ENCODE measurements at regions of chr15 and their contacts with region 1.

Region 1: DNA sequence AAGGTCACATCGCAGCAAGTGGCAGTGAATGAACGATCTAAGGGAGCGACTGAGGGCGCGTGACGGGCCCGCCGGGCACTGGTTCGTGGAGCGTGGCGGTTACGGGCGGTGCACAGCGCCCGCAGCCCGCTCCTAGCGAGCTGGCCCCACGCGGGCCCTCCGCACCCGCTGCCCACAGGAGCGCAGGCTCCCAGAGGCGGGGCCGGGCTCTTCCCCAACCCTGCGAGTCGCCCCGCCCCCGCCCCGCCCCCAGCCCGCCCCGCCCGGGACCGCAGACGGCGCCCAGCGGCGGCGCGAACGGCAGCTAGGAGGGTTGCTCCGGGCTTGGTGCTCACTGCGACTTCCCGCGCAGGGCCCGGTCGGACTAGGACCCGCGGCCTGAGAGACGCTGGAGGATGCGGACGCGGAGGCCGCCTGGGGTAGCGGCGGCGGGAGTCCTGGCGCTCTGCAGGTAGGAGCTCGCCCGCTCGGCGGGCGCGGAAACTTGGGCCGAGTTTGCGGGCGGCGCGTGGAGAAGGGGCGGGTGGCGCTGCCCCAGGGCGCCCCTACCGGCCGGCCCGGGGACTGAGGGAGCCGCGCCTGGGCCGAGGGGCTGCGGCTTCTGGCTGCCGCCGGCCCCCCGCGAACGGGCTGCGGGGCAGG is at the start of gene C15orf39:
- DNase-seq: peak; percentile 67
- H3K4me3 ChIP-seq: peak within 1 kb of the TSS; percentile 78 to 95 (median 87)
- H3K27ac ChIP-seq: peak within 1 kb of the TSS; percentile 89
- H3K4me1 ChIP-seq: peaks cover 33% of the 10 kb centered on the region
- H3K27me3 ChIP-seq: no peaks in the 10 kb centered on the region
- CTCF ChIP-seq: peak; percentile 40 to 62
- total RNA-seq, gene C15orf39: 3.8 to 22.8 TPM

Region 2: GRCh38 chr15:74937596-74938296 is 264.0 kb before region 1 on chr15 and contains the start of gene COX5A:
- CTCF ChIA-PET with region 1: no interaction called
- dilution Hi-C with region 1: no loop called
- in situ Hi-C with region 1: no loop called
- intact Hi-C with region 1: no loop called
- DNase-seq: peak; percentile 97
- H3K4me3 ChIP-seq: peak within 1 kb of the TSS; percentile 75 to 83 (median 81)
- H3K27ac ChIP-seq: peak within 1 kb of the TSS; percentile 66
- H3K4me1 ChIP-seq: peaks cover 2% of the 10 kb centered on the region
- H3K27me3 ChIP-seq: no peaks in the 10 kb centered on the region
- CTCF ChIP-seq: no peak
- total RNA-seq, gene COX5A: 40.2 to 209 TPM

Region 3: DNA sequence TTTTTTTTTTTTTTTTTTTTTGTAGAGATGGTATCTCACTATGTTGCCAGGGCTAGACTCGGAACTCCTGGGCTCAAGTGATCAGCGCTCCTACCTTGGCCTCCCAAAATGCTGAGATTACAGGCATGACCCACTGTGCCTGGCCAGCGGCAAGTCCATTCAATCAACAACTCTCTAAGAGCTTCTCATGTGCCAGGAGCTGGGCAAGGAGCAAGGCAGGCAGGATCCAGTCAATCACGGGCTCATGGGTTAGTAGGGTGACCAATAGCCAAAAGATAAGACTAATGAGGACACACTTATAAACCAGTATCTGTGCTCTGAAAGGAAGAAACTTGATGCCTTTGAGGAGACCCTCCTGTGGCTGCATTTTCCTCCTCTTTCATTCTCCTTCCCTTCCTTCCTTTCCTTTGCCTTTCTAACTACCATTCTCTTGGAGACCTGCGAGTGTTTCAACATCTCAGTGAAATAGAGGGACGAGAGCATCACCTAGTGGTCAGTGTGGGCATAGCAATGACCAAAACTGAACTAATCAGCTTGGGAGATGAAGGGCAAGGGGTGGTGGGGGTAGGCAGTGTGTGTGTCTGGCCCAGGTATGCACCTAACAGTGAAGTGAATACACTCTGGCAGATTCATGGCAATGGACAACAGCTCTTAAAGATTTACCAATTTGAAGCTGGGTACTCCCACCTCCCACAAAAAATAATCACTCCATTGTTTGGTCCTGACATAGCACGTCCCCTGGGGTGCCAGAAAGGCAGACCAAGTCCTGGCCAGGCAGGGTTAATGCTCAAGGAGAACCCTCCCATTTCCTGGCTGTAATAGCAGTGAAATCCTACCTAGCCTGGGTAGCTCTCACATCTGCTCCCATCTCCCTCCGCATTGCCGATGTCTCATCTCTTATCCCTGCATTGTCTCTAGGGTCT is 251.4 kb before region 1 on chr15:
- CTCF ChIA-PET with region 1: interaction called, 4 read pairs
- dilution Hi-C with region 1: no loop called
- in situ Hi-C with region 1: no loop called
- intact Hi-C with region 1: loop called (anchors 1 kb)
- DNase-seq: peak; percentile 59
- H3K4me3 ChIP-seq: no peak overlapping the region
- H3K27ac ChIP-seq: no peak overlapping the region
- H3K4me1 ChIP-seq: no peaks in the 10 kb centered on the region
- H3K27me3 ChIP-seq: no peaks in the 10 kb centered on the region
- CTCF ChIP-seq: peak; percentile 99 to 100

Region 4: DNA sequence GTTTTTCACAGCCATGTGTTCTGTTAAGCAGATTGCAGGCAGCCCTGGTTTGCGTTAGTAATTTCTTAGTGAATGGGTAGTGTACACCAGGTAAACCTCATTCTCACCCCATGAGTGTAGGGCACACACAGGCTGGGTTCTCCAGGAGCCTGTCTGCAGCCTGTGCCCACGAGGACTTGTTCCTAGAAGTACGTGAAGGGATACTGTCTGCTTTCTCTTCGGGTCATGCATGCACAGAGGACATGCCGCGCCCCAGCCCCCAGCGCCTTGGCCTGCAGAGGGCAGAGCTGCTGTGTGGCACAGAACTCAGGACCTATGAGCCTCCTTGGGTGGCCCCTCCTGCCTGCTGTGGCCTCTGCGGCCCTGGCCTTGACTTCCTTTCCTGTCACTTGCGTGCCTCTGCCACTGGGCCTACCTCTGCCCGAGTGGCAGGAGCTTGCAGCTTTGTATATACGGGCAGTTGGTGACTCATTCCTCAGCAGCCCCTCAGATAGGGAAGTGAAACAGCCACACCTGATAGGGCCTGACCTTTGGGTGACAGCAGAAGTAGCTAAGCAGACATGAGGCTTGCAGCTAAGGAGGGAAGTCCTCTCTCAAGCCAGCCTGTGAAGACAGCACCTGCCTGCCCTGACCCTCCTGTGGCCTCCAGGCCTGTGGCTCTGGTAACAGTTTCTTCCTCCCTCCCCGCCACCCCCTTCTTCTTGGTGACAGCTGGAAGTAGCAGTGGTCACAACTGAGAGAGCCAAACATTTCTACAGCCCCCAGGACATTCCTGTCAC is 158.8 kb before region 1 on chr15:
- CTCF ChIA-PET with region 1: interaction called, 3 read pairs
- dilution Hi-C with region 1: no loop called
- in situ Hi-C with region 1: no loop called
- intact Hi-C with region 1: loop called (anchors 1 kb)
- DNase-seq: peak; percentile 15
- H3K4me3 ChIP-seq: no peak overlapping the region
- H3K27ac ChIP-seq: no peak overlapping the region
- H3K4me1 ChIP-seq: peaks cover 27% of the 10 kb centered on the region
- H3K27me3 ChIP-seq: no peaks in the 10 kb centered on the region
- CTCF ChIP-seq: peak; percentile 17 to 48

Region 5: DNA sequence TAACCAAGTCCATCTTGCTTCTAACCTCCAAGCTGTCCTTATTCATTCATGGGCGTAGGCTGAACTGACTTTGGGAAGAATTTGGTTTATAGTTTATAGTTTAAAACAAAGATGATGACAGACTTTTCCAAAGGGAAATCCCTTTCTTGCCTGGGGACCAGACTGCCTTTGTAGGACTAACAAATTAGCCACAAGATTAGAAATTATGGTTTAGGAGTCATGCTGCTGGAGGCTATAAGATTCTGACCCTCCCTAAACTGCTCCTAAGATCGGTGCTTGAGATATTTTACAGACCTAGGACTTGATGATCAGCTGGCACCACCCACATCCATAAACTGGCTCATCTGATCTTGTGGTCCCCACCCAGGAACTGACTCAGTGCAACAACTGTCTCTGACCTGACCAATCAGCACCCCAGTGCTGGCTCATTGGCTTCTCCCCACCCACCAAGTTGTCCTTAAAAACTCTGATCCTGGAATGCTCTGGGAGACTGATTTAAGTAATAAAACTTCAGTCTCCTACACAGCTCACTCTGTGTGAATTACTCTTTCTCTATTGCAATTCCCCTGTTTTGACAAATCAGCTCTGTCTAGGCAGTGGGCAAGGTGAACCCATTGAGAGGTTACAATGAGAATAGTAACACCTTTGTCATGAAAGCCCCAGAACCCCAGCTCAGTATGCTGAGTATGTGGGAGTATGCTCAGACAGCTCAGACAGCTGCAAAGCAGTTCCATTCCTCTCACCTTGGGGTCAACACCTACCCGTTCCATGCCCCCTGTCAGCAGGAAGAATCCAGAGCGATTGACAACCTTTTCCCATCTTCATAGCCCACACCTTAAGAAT is 51.6 kb before region 1 on chr15:
- CTCF ChIA-PET with region 1: interaction called, 4 read pairs
- dilution Hi-C with region 1: no loop called
- in situ Hi-C with region 1: no loop called
- intact Hi-C with region 1: loop called (anchors 1 kb)
- DNase-seq: peak; percentile 98
- H3K4me3 ChIP-seq: no peak overlapping the region
- H3K27ac ChIP-seq: peak overlapping the region; percentile 70
- H3K4me1 ChIP-seq: peaks cover 19% of the 10 kb centered on the region
- H3K27me3 ChIP-seq: no peaks in the 10 kb centered on the region
- CTCF ChIP-seq: no peak

Region 6: GRCh38 chr15:75453703-75454470 is 252.2 kb after region 1 on chr15:
- CTCF ChIA-PET with region 1: no interaction called
- dilution Hi-C with region 1: no loop called
- in situ Hi-C with region 1: no loop called
- intact Hi-C with region 1: no loop called
- DNase-seq: peak; percentile 100
- H3K4me3 ChIP-seq: peak overlapping the region; percentile 80 to 96 (median 91)
- H3K27ac ChIP-seq: peak overlapping the region; percentile 87
- H3K4me1 ChIP-seq: peaks cover 31% of the 10 kb centered on the region
- H3K27me3 ChIP-seq: no peaks in the 10 kb centered on the region
- CTCF ChIP-seq: no peak

Region 7: GRCh38 chr15:75661091-75661777 is 459.5 kb after region 1 on chr15:
- CTCF ChIA-PET with region 1: no interaction called
- dilution Hi-C with region 1: no loop called
- in situ Hi-C with region 1: no loop called
- intact Hi-C with region 1: loop called (anchors 10 kb)
- DNase-seq: peak; percentile 93
- H3K4me3 ChIP-seq: no peak overlapping the region
- H3K27ac ChIP-seq: peak overlapping the region; percentile 82
- H3K4me1 ChIP-seq: peaks cover 50% of the 10 kb centered on the region
- H3K27me3 ChIP-seq: no peaks in the 10 kb centered on the region
- CTCF ChIP-seq: no peak

Measured in mammary epithelial cell (primary cell).